Activated T-helper 1 cell treated with anti-CD3 and anti-CD28 coated beads, Interleukin-12 subunit alpha, Interleukin-12 subunit beta, Interleukin-2, Interleukin-4 antibody, amounts not matched to agents 30 ng/mL and 10 ng/mL and 1 ng/mL, durations not matched to agents 14 hours and 24 hours and 36 hours (primary cell): ENCODE measurements at regions of chr4 and their contacts with region 1.

Region 1: DNA sequence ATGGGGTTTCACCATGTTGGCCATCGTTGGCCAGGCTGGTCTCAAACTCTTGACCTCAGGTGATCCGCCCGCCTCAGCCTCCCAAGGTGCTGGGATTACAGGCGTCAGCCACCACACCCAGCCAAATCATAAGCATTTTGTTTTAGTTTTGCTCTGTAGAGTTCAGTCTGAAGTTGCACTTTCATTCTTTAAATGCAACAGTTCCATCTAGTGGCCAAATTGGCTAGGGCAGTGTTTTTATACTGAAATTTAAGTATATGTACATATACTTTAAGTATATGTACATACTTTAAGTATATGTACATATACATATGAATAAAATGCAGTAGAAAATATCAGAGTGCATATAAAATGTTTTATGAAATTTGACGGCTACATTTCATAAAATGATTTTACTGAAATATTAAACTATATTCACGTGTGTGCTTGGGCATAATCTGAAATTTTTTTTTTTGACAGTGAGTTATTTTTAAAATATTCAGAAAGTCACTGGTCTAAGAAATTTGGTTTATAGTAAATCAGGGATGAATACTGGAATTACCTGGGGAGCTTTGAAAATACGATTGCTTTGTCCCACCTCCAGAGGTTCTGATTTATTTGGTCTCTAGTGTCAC is 145.5 kb downstream of the NWD2 start:
- DNase-seq: no peak
- H3K4me3 Mint-ChIP-seq: no peak overlapping the region
- H3K27ac Mint-ChIP-seq: no peak overlapping the region
- H3K4me1 Mint-ChIP-seq: peaks cover 14% of the 10 kb centered on the region
- H3K27me3 Mint-ChIP-seq: peaks cover 2% of the 10 kb centered on the region

Region 2: GRCh38 chr4:36399762-36400353 is 990.2 kb before region 1 on chr4:
- intact Hi-C with region 1: loop called (anchors 1 kb)
- DNase-seq: peak; percentile 15
- H3K4me3 Mint-ChIP-seq: no peak overlapping the region
- H3K27ac Mint-ChIP-seq: no peak overlapping the region
- H3K4me1 Mint-ChIP-seq: peaks cover 23% of the 10 kb centered on the region
- H3K27me3 Mint-ChIP-seq: peaks cover 9% of the 10 kb centered on the region

Region 3: DNA sequence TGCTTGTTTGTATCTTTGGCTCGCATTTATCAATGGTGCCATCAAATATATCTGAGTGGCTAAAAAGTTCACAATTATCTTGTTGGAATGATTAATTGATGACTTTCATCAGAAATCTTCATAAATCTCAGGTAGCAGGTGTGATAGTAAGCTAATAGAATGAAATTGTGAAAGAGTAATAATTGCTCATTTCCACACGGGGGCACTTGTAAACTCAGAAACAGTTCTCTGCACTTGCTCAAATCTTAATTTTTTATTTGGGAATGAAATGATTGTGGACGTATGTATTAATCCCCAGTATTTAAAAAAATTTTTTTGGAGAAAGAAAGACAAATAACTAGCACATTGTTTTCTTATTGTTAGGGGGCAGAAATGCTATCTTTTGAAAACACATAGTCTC is 975.8 kb before region 1 on chr4:
- intact Hi-C with region 1: loop called (anchors 2 kb)
- DNase-seq: no peak
- H3K4me3 Mint-ChIP-seq: no peak overlapping the region
- H3K27ac Mint-ChIP-seq: no peak overlapping the region
- H3K4me1 Mint-ChIP-seq: no peaks in the 10 kb centered on the region
- H3K27me3 Mint-ChIP-seq: peaks cover 31% of the 10 kb centered on the region